Ascending aorta (tissue), 2 donors: ENCODE measurements at regions of chr20 and their contacts with region 1.

Region 1: DNA sequence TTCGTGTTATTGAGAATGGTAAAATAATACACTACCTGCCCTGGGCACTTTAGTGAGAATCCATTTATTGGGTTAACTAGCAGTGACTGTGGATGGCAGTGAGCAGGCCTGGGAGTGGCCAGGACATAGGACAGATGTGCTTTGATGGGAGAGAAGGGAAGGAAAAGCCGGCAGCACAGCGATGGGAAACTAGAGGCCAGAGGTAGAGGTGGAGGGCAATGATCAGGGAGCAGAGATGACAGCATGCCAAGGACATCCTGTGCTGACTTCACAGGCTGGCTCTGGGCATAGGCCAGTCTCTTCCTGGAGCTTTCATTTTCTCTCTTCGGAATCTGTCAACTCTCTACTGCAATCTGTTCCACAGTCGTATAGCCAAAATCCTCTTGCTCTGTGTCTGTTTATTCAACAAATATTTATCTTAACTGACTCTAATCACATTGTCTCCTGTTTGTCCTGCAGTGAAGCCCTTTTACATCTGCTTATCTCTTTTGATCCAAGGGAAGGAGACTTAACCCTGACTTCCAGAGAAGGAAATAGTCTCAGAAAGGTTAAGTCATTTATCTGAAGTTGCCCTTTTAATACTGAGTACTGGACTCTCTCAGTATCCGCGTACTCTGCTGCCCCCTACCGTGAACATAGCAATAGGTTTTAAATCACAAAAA is 18.4 kb upstream of the MMP24 start:
- DNase-seq: peak in 1 of 2 donors; percentile 89
- H3K4me3 ChIP-seq: peak overlapping the region in 1 of 2 donors; percentile 42
- H3K27ac ChIP-seq: peak overlapping the region; percentile 77 to 79
- H3K4me1 ChIP-seq: peaks cover 0 to 4% of the 10 kb centered on the region in 2 donors
- H3K27me3 ChIP-seq: no peaks in the 10 kb centered on the region
- CTCF ChIP-seq: peak; percentile 60 to 87 (median 79)

Region 2: DNA sequence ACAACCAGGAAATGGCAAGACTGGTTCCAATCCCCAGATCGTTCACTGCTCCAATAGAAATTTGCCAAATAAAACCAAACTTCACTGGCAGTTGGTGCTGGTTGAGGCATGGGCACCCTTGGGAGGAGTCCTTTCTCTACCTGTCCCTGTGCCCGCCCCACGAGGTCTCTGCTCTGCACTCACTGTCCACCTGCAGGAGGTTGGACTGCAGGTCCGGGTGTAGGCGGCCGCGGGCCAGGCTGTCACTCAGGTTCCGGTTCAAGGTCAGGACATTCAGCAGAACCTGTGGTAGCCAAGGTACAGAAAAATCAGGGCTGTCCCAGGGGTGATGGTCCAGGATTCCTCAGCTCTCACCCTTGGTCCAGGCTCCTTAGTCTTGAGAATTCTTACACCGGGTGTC is 358.3 kb before region 1 on chr20:
- intact Hi-C with region 1: loop called (anchors 10 kb)
- DNase-seq: no peak
- H3K4me3 ChIP-seq: no peak overlapping the region
- H3K27ac ChIP-seq: no peak overlapping the region
- H3K4me1 ChIP-seq: no peaks in the 10 kb centered on the region
- H3K27me3 ChIP-seq: no peaks in the 10 kb centered on the region
- CTCF ChIP-seq: no peak

Region 3: DNA sequence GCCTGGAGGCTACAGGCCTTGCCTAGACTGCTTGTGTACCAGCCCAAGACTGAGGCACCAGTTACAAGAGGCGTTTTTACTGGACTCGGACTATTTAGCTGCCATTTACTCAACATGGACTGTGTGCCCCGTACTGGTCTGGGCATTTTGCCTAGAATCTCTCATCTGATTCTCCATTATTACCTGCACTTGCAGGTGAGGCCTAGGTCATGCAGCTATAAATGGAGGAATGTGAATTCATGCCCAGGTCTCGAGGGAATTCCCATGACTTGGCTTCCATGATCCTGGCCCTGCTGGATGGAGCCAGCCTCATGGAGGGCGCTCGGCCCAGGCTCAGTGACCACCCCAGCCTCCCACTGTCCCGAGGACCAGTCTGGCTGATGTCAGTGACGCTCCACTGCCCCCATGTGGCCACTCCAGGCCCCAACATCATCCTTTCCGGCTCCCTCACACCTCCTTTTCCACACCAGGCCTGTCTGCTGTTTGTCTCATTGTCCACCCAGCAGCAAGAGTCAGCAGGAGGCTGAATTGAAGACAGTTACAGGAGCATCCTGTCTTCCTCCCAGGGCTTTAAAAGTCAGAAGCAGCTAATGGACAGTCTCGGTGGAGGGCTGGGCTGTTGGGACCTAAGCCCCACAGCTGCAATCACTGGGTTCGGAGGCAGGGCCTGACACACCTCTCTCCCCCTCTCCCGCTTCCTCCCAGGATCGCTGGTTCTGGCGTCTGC is 61.1 kb after region 1 on chr20:
- intact Hi-C with region 1: loop called (anchors 5 kb)
- DNase-seq: peak in 1 of 2 donors; percentile 79
- H3K4me3 ChIP-seq: no peak overlapping the region
- H3K27ac ChIP-seq: no peak overlapping the region
- H3K4me1 ChIP-seq: peaks cover 0 to 8% of the 10 kb centered on the region in 2 donors
- H3K27me3 ChIP-seq: no peaks in the 10 kb centered on the region
- CTCF ChIP-seq: peak; percentile 51 to 75 (median 73)